ENCODE measurements at regions of chr2 and their contacts with region 1.

Region 1: GRCh38 chr2:178112202-178113152 is at the start of gene RBM45:
- DNase-seq: peak; percentile 88 to 93
- ATAC-seq: peak; percentile 97 to 100 (median 99)
- H3K4me3 ChIP-seq: peak within 1 kb of the TSS; percentile 69 to 98 (median 86)
- H3K27ac ChIP-seq: peak within 1 kb of the TSS; percentile 30 to 89 (median 82)
- H3K4me1 ChIP-seq: peaks cover 0 to 22% (median 9%) of the 10 kb centered on the region in 9 donors
- H3K27me3 ChIP-seq: no peaks in the 10 kb centered on the region
- CTCF ChIP-seq: peak; percentile 92 to 100 (median 98)
- total RNA-seq, gene RBM45: 4.4 to 10.5 (median 5.9) TPM

Region 2: DNA sequence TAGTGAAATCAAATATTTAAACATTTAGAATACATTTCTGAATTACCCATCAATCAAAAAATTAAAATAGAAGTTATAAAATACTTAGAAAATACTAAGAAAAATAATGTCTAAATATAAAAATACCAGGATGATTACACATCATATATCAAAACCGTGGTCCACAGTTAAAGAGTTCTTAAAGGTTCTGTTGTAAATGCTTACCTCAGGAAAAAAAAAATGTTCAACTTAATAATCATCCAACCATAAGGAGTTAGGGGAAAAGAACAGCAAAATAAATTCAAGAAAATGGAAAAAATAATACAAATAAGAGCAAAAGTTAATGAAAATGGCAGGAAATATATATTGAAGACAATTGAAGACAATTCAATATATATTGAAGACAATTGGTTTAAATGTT is 83.1 kb before region 1 on chr2:
- intact Hi-C with region 1: no loop called
- DNase-seq: no peak
- ATAC-seq: no peak
- H3K4me3 ChIP-seq: no peak overlapping the region
- H3K27ac ChIP-seq: no peak overlapping the region
- H3K4me1 ChIP-seq: no peaks in the 10 kb centered on the region
- H3K27me3 ChIP-seq: no peaks in the 10 kb centered on the region
- CTCF ChIP-seq: no peak

Region 3: GRCh38 chr2:178188466-178188865 is 76.0 kb after region 1 on chr2:
- intact Hi-C with region 1: no loop called
- DNase-seq: no peak
- ATAC-seq: no peak
- H3K4me3 ChIP-seq: no peak overlapping the region
- H3K27ac ChIP-seq: no peak overlapping the region
- H3K4me1 ChIP-seq: peaks cover 0 to 6% (median 2%) of the 10 kb centered on the region in 9 donors
- H3K27me3 ChIP-seq: peaks cover 0 to 29% (median 4%) of the 10 kb centered on the region in 7 donors
- CTCF ChIP-seq: no peak

Region 4: DNA sequence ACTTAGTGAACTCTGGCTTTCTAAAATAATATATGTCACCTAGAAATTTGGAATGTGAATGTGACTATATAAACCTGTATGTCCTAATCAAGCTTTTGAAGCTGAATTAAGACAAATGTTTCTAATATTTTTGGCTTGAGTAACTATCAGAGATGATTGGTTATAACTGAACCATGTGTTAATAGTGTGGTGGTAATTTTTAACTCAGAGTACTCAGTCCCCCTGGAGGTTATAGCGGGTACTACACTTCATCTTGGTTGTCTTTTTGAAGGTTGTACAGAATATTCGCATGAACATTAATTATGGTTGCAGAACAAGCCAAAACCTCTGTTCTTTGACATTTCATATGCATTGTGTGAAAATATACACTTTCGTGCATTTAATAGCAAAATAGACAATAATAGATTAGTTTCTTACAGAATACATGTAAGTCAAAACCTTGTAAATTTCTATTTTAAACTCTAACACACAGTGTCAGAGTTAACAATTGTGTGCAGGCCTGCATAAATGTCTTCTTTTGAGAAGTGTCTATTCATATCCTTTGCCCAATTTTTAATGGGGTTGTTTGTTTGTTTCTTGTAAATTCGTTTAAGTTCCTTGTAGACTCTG is 167.9 kb after region 1 on chr2:
- intact Hi-C with region 1: loop called in 3 of 10 experiments (anchors 5 to 10 kb)
- DNase-seq: peak in 1 of 2 donors; percentile 51
- ATAC-seq: peak in 6 of 8 donors; percentile 34 to 77 (median 58)
- H3K4me3 ChIP-seq: no peak overlapping the region
- H3K27ac ChIP-seq: no peak overlapping the region
- H3K4me1 ChIP-seq: peaks cover 0 to 20% (median 0%) of the 10 kb centered on the region in 9 donors
- H3K27me3 ChIP-seq: no peaks in the 10 kb centered on the region
- CTCF ChIP-seq: peak; percentile 73 to 86 (median 80)

Region 5: DNA sequence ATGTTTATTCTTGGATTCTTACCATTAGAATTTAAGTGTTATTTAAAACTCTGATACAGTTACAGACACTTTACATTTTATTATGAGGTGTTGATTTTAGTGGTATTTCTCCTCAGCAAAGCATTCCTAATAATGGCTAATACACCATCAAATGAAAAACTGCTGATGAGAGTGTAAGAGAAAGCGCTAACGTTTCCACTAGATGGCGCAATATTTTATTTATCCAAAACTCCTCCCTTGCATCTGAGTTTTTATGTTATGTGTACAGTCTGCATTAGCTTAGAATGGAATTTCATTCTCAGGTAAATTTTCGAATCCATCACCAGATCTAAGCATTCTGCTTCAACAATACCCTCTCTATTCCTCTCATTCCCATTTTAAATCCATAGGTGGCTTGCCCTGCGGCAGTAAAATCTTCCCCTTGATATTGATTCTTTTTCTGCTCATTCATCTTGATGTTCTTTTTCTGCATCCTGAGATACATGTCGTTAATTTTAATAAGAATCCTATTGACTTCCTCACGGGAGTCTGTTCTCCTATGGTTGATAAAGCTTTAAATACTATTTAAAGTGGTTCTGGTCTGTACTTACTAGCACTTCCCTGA is 284.6 kb after region 1 on chr2:
- intact Hi-C with region 1: loop called in 2 of 10 experiments (anchors 5 to 10 kb)
- DNase-seq: peak in 1 of 2 donors; percentile 11
- ATAC-seq: peak in 5 of 8 donors; percentile 50 to 79 (median 73)
- H3K4me3 ChIP-seq: no peak overlapping the region
- H3K27ac ChIP-seq: no peak overlapping the region
- H3K4me1 ChIP-seq: peaks cover 0 to 4% (median 0%) of the 10 kb centered on the region in 9 donors
- H3K27me3 ChIP-seq: no peaks in the 10 kb centered on the region
- CTCF ChIP-seq: peak; percentile 31 to 82 (median 72)

Region 6: GRCh38 chr2:178404368-178404767 is 291.9 kb after region 1 on chr2:
- intact Hi-C with region 1: loop called in 2 of 10 experiments (anchors 5 to 10 kb)
- DNase-seq: no peak
- ATAC-seq: peak in 4 of 8 donors; percentile 11 to 67 (median 46)
- H3K4me3 ChIP-seq: no peak overlapping the region
- H3K27ac ChIP-seq: no peak overlapping the region
- H3K4me1 ChIP-seq: no peaks in the 10 kb centered on the region
- H3K27me3 ChIP-seq: no peaks in the 10 kb centered on the region
- CTCF ChIP-seq: no peak

Region 7: DNA sequence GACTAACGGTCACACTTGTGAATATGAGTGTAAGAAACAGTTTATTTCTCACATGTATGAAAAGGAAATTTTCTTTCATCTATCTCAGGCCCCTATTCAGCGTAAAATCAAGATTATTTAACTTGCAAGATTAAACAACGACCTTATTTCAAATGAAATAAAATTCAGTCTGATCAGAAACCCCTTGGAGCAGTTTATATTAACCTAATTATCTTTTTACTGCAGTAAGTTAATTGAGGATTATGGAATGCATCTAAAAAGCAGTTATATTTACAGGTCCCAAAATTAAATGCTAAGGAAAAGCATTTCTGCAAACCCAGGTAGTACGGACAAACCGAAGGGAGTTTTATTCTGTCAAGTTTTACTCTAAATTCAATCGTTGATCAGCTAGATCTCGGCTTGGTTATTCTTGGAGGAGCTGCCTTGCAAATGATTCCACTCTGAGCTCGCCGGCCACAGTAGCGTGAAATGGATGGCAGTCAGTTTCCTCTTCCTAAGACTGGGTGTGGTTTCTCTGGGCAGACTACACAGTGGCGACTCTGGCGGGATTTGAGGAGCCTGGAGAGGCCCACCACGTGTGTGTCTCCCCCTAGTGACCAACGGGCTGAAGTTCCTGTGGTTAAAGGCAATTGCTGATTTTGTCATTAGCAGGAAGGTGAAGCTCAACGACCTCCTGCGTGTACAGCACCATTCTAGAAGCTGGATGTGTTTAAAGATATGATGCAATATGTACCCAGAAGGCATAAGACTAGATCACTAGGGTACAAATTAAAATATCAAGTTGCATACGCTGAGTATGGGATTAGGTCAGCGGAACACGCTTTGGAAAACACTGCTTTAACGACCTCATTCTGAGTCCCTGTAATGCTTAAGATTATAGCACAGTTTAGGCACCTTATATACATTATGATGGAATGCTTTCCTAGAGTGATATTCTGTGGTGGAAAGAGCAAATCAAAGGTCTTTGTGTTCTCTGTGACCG is 302.1 kb after region 1 on chr2:
- intact Hi-C with region 1: loop called in 8 of 10 experiments (anchors 5 to 10 kb)
- DNase-seq: peak; percentile 82 to 93
- ATAC-seq: peak; percentile 95 to 98 (median 96)
- H3K4me3 ChIP-seq: peak overlapping the region; percentile 32 to 83 (median 69)
- H3K27ac ChIP-seq: peak overlapping the region; percentile 77 to 98 (median 93)
- H3K4me1 ChIP-seq: peaks cover 0 to 23% (median 9%) of the 10 kb centered on the region in 9 donors
- H3K27me3 ChIP-seq: no peaks in the 10 kb centered on the region
- CTCF ChIP-seq: peak; percentile 83 to 95 (median 91)